ENCODE measurements at regions of chr21 and their contacts with region 1.

Region 1: GRCh38 chr21:36319765-36320420 is at the start of gene MORC3:
- DNase-seq: peak; percentile 99
- ATAC-seq: peak; percentile 89
- H3K4me3 Mint-ChIP-seq: peak within 1 kb of the TSS; percentile 94
- H3K27ac Mint-ChIP-seq: peak within 1 kb of the TSS; percentile 98
- H3K4me1 Mint-ChIP-seq: peaks cover 34% of the 10 kb centered on the region
- H3K27me3 Mint-ChIP-seq: no peaks in the 10 kb centered on the region
- total RNA-seq, gene MORC3: 23.9 to 25.0 TPM

Region 2: GRCh38 chr21:36135391-36136102 is 184.3 kb before region 1 on chr21:
- CTCF ChIA-PET with region 1: interaction called, 5 read pairs
- POLR2A ChIA-PET with region 1: interaction called, 4 read pairs
- intact Hi-C with region 1: loop called in 1 of 2 experiments (anchors 2 kb)
- DNase-seq: peak; percentile 78
- ATAC-seq: peak; percentile 73
- H3K4me3 Mint-ChIP-seq: peak overlapping the region; percentile 87
- H3K27ac Mint-ChIP-seq: peak overlapping the region; percentile 78
- H3K4me1 Mint-ChIP-seq: peaks cover 22% of the 10 kb centered on the region
- H3K27me3 Mint-ChIP-seq: no peaks in the 10 kb centered on the region

Region 3: DNA sequence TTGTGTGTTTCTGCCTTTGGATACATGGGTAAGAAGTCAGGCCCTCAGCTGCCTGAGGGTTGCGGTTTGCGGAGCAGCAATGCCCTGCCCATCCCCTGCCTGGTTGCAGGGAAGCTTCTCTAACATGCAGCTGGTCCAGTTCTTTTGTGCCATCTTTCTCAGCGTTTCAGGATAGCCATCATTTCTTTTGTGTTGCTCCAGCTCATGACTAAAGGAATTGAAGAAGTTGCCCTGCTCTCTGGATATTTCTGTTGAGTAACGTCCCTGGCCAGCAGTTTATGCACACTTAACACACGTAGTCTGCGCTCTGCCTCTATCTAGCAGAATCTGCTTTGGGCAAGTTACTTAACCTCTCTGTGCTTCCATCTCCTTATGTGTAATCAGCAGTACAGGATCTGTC is 101.2 kb before region 1 on chr21:
- CTCF ChIA-PET with region 1: no interaction called
- POLR2A ChIA-PET with region 1: no interaction called
- intact Hi-C with region 1: no loop called
- DNase-seq: no peak
- ATAC-seq: no peak
- H3K4me3 Mint-ChIP-seq: no peak overlapping the region
- H3K27ac Mint-ChIP-seq: no peak overlapping the region
- H3K4me1 Mint-ChIP-seq: no peaks in the 10 kb centered on the region
- H3K27me3 Mint-ChIP-seq: no peaks in the 10 kb centered on the region

Region 4: GRCh38 chr21:36260030-36260787 is 59.7 kb before region 1 on chr21:
- CTCF ChIA-PET with region 1: interaction called, 4 read pairs
- POLR2A ChIA-PET with region 1: interaction called, 4 read pairs
- intact Hi-C with region 1: loop called in 1 of 2 experiments (anchors 1 kb)
- DNase-seq: peak; percentile 52
- ATAC-seq: peak; percentile 82
- H3K4me3 Mint-ChIP-seq: peak overlapping the region; percentile 62
- H3K27ac Mint-ChIP-seq: peak overlapping the region; percentile 87
- H3K4me1 Mint-ChIP-seq: peaks cover 19% of the 10 kb centered on the region
- H3K27me3 Mint-ChIP-seq: no peaks in the 10 kb centered on the region

Region 5: DNA sequence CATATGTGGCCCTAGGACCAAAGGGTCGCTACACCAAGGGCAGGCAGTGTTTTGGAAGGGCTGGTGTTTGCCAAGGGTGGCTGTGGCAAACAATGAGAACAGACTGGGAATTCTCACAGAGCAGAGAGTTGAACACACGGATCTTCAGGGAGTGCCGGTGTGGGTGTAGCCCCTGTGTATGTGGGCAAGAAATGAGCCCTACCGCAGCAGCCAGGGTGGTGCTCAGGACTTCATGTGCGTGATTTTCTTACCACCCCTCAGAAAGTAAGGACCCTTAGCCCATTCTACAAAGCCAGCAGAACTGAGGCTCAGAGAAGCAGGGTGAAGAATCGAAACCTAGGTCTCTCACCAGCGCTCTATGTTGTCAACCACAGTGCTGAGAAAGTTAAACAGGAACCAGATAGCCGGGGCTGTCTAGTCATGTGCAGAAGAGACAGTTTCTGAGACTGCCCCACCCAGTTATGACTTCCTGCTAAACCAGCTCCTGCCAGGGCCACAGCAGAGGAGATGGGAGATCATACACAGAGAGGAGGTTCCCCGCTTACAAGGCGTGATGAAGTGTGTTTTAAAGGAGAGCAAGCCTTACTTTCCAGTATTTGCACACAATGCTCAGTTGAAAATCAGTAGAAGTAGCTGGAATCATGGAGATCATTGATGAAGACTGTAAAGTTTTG is 21.8 kb before region 1 on chr21:
- CTCF ChIA-PET with region 1: interaction called, 4 read pairs
- POLR2A ChIA-PET with region 1: interaction called, 18 read pairs
- intact Hi-C with region 1: no loop called
- DNase-seq: peak; percentile 80
- ATAC-seq: peak; percentile 96
- H3K4me3 Mint-ChIP-seq: peak overlapping the region; percentile 57
- H3K27ac Mint-ChIP-seq: peak overlapping the region; percentile 90
- H3K4me1 Mint-ChIP-seq: peaks cover 47% of the 10 kb centered on the region
- H3K27me3 Mint-ChIP-seq: no peaks in the 10 kb centered on the region

Region 6: GRCh38 chr21:36403713-36404112 is 83.8 kb after region 1 on chr21:
- CTCF ChIA-PET with region 1: no interaction called
- POLR2A ChIA-PET with region 1: interaction called, 12 read pairs
- intact Hi-C with region 1: no loop called
- DNase-seq: no peak
- ATAC-seq: no peak
- H3K4me3 Mint-ChIP-seq: no peak overlapping the region
- H3K27ac Mint-ChIP-seq: no peak overlapping the region
- H3K4me1 Mint-ChIP-seq: no peaks in the 10 kb centered on the region
- H3K27me3 Mint-ChIP-seq: no peaks in the 10 kb centered on the region

Region 7: GRCh38 chr21:37072988-37073416 is 753.1 kb after region 1 on chr21 and contains the starts of genes PIGP and TTC3:
- CTCF ChIA-PET with region 1: no interaction called
- POLR2A ChIA-PET with region 1: no interaction called
- intact Hi-C with region 1: loop called in 1 of 2 experiments (anchors 1 kb)
- DNase-seq: peak; percentile 97
- ATAC-seq: peak; percentile 74
- H3K4me3 Mint-ChIP-seq: peak within 1 kb of the TSS; percentile 99
- H3K27ac Mint-ChIP-seq: peak within 1 kb of the TSS; percentile 92
- H3K4me1 Mint-ChIP-seq: peaks cover 48% of the 10 kb centered on the region
- H3K27me3 Mint-ChIP-seq: no peaks in the 10 kb centered on the region
- total RNA-seq, gene PIGP: 32.8 to 41.0 TPM
- total RNA-seq, gene TTC3: 65.1 to 78.9 TPM

Region 8: GRCh38 chr21:38126669-38127303 is 1806.9 kb after region 1 on chr21:
- CTCF ChIA-PET with region 1: no interaction called
- POLR2A ChIA-PET with region 1: no interaction called
- intact Hi-C with region 1: no loop called
- DNase-seq: peak; percentile 80
- ATAC-seq: peak; percentile 76
- H3K4me3 Mint-ChIP-seq: no peak overlapping the region
- H3K27ac Mint-ChIP-seq: no peak overlapping the region
- H3K4me1 Mint-ChIP-seq: no peaks in the 10 kb centered on the region
- H3K27me3 Mint-ChIP-seq: peaks cover 11% of the 10 kb centered on the region

Measured in activated CD4-positive, alpha-beta T cell treated with anti-CD3 and anti-CD28 coated beads for 36 hours (primary cell).